K562 (cell line): ENCODE measurements at regions of chr3 and their contacts with region 1.

Region 1: DNA sequence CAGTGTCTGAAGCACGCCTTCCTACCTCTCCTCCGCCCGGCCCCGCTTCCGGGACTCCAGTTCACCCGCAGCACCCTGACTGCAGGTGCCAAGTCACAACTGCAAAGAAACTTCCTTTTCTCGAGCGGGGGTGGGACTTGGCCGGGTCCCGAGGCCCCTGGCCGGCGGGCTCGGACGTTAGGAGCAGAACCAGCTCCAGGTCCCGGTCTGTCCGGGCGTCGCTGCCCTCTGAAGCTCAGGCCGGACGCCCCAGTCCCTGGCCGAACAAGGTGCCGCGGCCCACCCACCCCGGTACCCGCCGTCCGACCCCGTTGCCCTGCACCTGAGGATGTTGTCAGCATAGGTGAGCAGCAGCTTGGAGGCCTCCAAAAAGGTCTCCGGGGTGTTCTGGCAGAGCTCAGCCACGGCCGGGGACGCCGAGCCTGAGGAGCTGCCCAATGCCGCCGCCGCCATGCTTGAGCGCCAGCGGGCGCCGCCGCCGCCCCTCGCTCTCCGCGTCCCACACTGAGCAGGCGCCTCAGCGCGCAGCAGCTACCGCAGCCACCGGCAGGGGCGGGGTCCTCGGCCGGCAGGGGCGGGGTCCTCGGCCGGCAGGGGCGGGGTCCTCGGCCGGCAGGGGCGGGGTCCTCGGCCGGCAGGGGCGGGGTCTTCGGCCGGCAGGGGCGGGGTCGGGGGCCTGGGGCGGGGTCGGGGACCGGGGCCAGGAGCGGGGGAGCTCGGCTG is at the start of gene NGLY1:
- DNase-seq: peak; percentile 91 to 97 (median 96)
- ATAC-seq: peak; percentile 89
- H3K4me3 ChIP-seq: peak within 1 kb of the TSS; percentile 85
- H3K27ac ChIP-seq: peak within 1 kb of the TSS; percentile 83
- H3K4me1 ChIP-seq: peaks cover 12 to 37% of the 10 kb centered on the region in 2 experiments; a peak in 4 of 5 replicates
- H3K27me3 ChIP-seq: no peaks in the 10 kb centered on the region
- CTCF ChIP-seq: peak in 2 of 3 experiments; percentile 6 to 25; a peak in 1 of 6 replicates
- EP300 ChIP-seq: no peak
- POLR2A ChIP-seq: peak; percentile 91
- RAD21 ChIP-seq: no peak
- polyA plus RNA-seq, gene NGLY1: 52.2 to 77.9 TPM

Region 2: DNA sequence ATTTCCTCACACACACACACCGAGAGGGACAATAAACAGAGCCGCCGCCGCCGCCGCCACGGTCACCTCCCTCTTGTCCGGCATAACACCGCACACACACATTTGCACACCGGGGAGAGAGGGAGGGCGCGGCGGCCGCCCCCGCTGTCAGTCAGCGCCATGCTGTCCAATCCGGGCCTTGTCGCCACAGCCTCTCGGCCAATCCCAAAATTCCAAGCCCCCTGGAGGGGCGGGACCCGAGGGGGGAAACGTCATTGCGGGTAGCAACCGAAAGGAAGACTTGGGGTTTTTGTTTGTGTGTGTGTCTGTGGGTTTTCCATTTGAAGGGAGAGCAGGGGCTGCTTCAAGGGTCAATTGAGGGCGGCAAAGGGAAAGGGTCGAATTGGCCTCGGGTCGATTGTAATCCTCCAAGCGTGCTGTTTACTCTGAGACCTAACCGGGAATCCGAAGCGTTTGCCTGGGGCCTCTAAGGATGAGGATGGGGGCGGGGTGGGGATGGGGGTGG is 118.2 kb before region 1 on chr3 and contains the start of gene TOP2B:
- CTCF ChIA-PET with region 1: no interaction called
- POLR2A ChIA-PET with region 1: no interaction called
- in situ Hi-C with region 1: no loop called
- intact Hi-C with region 1: loop called (anchors 2 kb)
- DNase-seq: peak; percentile 98 to 99 (median 99)
- ATAC-seq: peak; percentile 95
- H3K4me3 ChIP-seq: peak within 1 kb of the TSS; percentile 75
- H3K27ac ChIP-seq: peak within 1 kb of the TSS; percentile 93
- H3K4me1 ChIP-seq: peaks cover 9 to 20% of the 10 kb centered on the region in 2 experiments
- H3K27me3 ChIP-seq: no peaks in the 10 kb centered on the region
- CTCF ChIP-seq: no peak
- EP300 ChIP-seq: peak; percentile 4; the same call in 1 of the 2 replicates
- POLR2A ChIP-seq: peak; percentile 94
- RAD21 ChIP-seq: no peak
- polyA plus RNA-seq, gene TOP2B: 45.3 to 57.8 TPM

Region 3: GRCh38 chr3:25768851-25769250 is 14.2 kb before region 1 on chr3:
- CTCF ChIA-PET with region 1: no interaction called
- POLR2A ChIA-PET with region 1: interaction called, 10 read pairs
- in situ Hi-C with region 1: no loop called
- intact Hi-C with region 1: no loop called
- DNase-seq: no peak
- ATAC-seq: no peak
- H3K4me3 ChIP-seq: no peak overlapping the region
- H3K27ac ChIP-seq: no peak overlapping the region
- H3K4me1 ChIP-seq: no peaks in the 10 kb centered on the region
- H3K27me3 ChIP-seq: no peaks in the 10 kb centered on the region
- CTCF ChIP-seq: no peak
- EP300 ChIP-seq: no peak
- POLR2A ChIP-seq: no peak
- RAD21 ChIP-seq: no peak

Region 4: GRCh38 chr3:25863416-25863959 is 80.4 kb after region 1 on chr3:
- CTCF ChIA-PET with region 1: no interaction called
- POLR2A ChIA-PET with region 1: no interaction called
- in situ Hi-C with region 1: no loop called
- intact Hi-C with region 1: no loop called
- DNase-seq: no peak
- ATAC-seq: peak; percentile 75
- H3K4me3 ChIP-seq: no peak overlapping the region
- H3K27ac ChIP-seq: no peak overlapping the region
- H3K4me1 ChIP-seq: no peaks in the 10 kb centered on the region
- H3K27me3 ChIP-seq: no peaks in the 10 kb centered on the region
- CTCF ChIP-seq: peak in 1 of 3 experiments; percentile 19; a peak in 1 of 6 replicates
- EP300 ChIP-seq: no peak
- POLR2A ChIP-seq: no peak
- RAD21 ChIP-seq: no peak